HCT116 (cell line): ENCODE measurements at regions of chr6 and their contacts with region 1.

Region 1: GRCh38 chr6:86856937-86857563 is 80.3 kb upstream of the HTR1E start:
- DNase-seq: peak; percentile 31
- ATAC-seq: no peak; the same call in 1 of the 2 replicates
- H3K4me3 ChIP-seq: no peak overlapping the region
- H3K27ac ChIP-seq: no peak overlapping the region
- H3K4me1 ChIP-seq: no peaks in the 10 kb centered on the region
- H3K27me3 ChIP-seq: no peaks in the 10 kb centered on the region
- CTCF ChIP-seq: peak; percentile 39 to 84 (median 76); a peak in 5 of 6 replicates
- POLR2A ChIP-seq: no peak
- RAD21 ChIP-seq: peak; percentile 56

Region 2: DNA sequence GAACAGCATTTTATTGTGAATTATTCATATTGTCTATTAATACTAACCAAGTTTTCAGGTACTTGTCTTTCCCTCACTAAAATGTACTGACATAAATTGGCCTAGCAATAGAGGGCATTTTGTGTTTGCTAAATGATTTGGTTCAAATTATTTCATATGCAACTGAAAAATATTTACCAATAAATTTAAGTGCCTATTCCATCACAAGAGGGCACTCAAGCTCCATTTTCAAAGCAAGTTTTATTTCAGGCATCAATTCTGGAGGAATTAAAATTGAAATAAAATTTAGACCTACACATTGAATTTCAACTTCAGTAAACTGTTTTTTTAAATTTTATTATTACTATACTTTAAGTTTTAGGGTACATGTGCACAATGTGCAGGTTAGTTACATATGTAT is 1100.1 kb before region 1 on chr6:
- CTCF ChIA-PET with region 1: no interaction called
- POLR2A ChIA-PET with region 1: no interaction called
- RAD21 ChIA-PET with region 1: no interaction called
- intact Hi-C with region 1: loop called (anchors 2 kb)
- DNase-seq: peak; percentile 22
- ATAC-seq: no peak
- H3K4me3 ChIP-seq: no peak overlapping the region
- H3K27ac ChIP-seq: no peak overlapping the region
- H3K4me1 ChIP-seq: no peaks in the 10 kb centered on the region
- H3K27me3 ChIP-seq: no peaks in the 10 kb centered on the region
- CTCF ChIP-seq: peak; percentile 26 to 52 (median 48); a peak in 4 of 6 replicates
- POLR2A ChIP-seq: no peak
- RAD21 ChIP-seq: peak; percentile 72

Region 3: DNA sequence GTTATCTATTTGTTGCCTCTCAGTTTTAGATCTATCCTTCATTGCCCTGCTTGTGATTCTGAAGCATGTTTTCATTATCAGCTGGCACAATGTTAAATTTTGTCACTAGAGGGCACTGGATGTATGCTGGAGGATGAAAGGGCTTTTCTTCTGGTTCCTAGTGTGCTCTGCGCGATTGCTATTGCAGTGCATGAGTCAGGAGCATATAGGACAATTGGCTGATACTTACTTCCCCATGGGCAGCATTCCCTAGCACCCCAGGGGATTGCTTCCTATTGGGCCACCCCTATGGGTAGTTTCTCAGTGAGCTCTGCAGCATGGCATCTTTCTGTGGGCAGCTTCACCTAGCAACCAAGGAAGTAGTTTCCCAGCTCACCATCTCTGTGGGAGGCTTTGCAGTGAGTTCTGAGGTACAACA is 934.0 kb before region 1 on chr6:
- CTCF ChIA-PET with region 1: no interaction called
- POLR2A ChIA-PET with region 1: no interaction called
- RAD21 ChIA-PET with region 1: no interaction called
- intact Hi-C with region 1: loop called (anchors 2 kb)
- DNase-seq: peak; percentile 22
- ATAC-seq: peak; percentile 86
- H3K4me3 ChIP-seq: no peak overlapping the region
- H3K27ac ChIP-seq: no peak overlapping the region
- H3K4me1 ChIP-seq: no peaks in the 10 kb centered on the region
- H3K27me3 ChIP-seq: peaks cover 3% of the 10 kb centered on the region; the same call in 1 of the 2 replicates
- CTCF ChIP-seq: peak; percentile 61 to 76 (median 62); a peak in 5 of 6 replicates
- POLR2A ChIP-seq: no peak
- RAD21 ChIP-seq: peak; percentile 80

Region 4: GRCh38 chr6:86937219-86938079 is 80.4 kb after region 1 on chr6 and contains the start of gene HTR1E:
- CTCF ChIA-PET with region 1: interaction called, 14 read pairs
- POLR2A ChIA-PET with region 1: no interaction called
- RAD21 ChIA-PET with region 1: no interaction called
- intact Hi-C with region 1: no loop called
- DNase-seq: peak; percentile 4
- ATAC-seq: peak; percentile 91
- H3K4me3 ChIP-seq: no peak within 1 kb of the TSS
- H3K27ac ChIP-seq: no peak within 1 kb of the TSS
- H3K4me1 ChIP-seq: no peaks in the 10 kb centered on the region
- H3K27me3 ChIP-seq: peaks cover 30% of the 10 kb centered on the region
- CTCF ChIP-seq: peak; percentile 12 to 66 (median 55); a peak in 4 of 6 replicates
- POLR2A ChIP-seq: no peak
- RAD21 ChIP-seq: peak; percentile 54
- total RNA-seq, gene HTR1E: not detected

Region 5: DNA sequence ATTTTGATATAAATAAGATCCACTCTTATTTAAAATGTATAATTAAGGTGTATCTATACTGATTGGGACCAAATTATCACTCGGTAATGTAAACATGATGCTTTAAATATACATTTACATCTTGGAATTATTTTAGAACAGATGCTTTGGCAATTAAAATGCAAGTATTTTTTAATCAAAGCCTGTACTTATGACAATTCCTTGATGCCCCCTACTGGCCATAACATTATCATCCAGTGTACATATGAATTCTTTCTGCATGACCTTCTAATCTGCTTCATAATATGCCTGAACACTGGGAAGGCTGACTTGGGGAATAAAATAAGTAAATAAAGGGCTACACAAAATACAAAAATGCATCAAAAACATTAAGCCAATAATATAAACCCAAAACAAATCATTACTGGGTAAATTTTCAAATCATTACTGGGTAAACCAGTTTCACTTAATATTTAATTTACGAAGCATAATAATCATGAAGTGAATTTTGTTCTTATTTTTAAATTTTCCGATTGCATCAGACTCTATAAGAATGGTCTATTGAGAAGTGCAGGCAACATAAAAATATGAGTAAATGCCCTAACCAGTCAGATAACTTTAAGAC is 172.8 kb after region 1 on chr6:
- CTCF ChIA-PET with region 1: interaction called, 5 read pairs
- POLR2A ChIA-PET with region 1: no interaction called
- RAD21 ChIA-PET with region 1: no interaction called
- intact Hi-C with region 1: loop called (anchors 5 kb)
- DNase-seq: peak; percentile 61
- ATAC-seq: peak; percentile 74
- H3K4me3 ChIP-seq: no peak overlapping the region
- H3K27ac ChIP-seq: no peak overlapping the region
- H3K4me1 ChIP-seq: no peaks in the 10 kb centered on the region
- H3K27me3 ChIP-seq: peaks cover 25% of the 10 kb centered on the region
- CTCF ChIP-seq: peak; percentile 30 to 81 (median 63); a peak in 5 of 6 replicates
- POLR2A ChIP-seq: no peak
- RAD21 ChIP-seq: peak; percentile 58